ENCODE measurements at regions of chr3 and their contacts with region 1.

Region 1: GRCh38 chr3:98817547-98818041 is 54.5 kb downstream of the ST3GAL6 start:
- DNase-seq: no peak
- ATAC-seq: peak; percentile 65 to 93 (median 91)
- H3K4me3 ChIP-seq: no peak overlapping the region
- H3K27ac ChIP-seq: no peak overlapping the region
- H3K4me1 ChIP-seq: no peaks in the 10 kb centered on the region
- H3K27me3 ChIP-seq: no peaks in the 10 kb centered on the region
- CTCF ChIP-seq: peak; percentile 54 to 80 (median 72)

Region 2: GRCh38 chr3:98602078-98602678 is 215.4 kb before region 1 on chr3:
- intact Hi-C with region 1: loop called in 1 of 3 experiments (anchors 5 kb)
- DNase-seq: peak in 2 of 6 donors; percentile 13 to 49
- ATAC-seq: peak; percentile 60 to 95 (median 94)
- H3K4me3 ChIP-seq: no peak overlapping the region
- H3K27ac ChIP-seq: no peak overlapping the region
- H3K4me1 ChIP-seq: no peaks in the 10 kb centered on the region
- H3K27me3 ChIP-seq: no peaks in the 10 kb centered on the region
- CTCF ChIP-seq: peak in 3 of 4 donors; percentile 39 to 63 (median 56)

Region 3: DNA sequence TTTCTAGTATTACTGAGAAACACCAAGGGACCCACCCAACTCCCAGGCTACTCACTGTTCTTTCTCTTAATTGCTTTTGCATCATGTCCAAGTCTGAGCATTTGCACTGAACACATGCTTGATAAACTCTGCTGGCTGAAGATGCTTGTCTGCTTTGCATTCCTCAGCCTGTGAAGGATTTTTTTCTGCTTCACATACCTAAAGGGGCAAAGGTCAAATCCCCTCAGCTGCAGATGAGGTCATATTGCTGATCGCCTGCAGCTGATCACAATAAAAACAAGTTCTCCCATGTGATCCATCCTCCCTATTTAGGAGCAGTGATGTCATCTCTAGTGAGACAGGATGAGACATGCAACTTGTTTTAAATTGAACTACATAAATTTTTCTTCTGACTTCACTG is 168.5 kb after region 1 on chr3:
- intact Hi-C with region 1: loop called in 1 of 3 experiments (anchors 5 kb)
- DNase-seq: no peak
- ATAC-seq: no peak
- H3K4me3 ChIP-seq: no peak overlapping the region
- H3K27ac ChIP-seq: no peak overlapping the region
- H3K4me1 ChIP-seq: no peaks in the 10 kb centered on the region
- H3K27me3 ChIP-seq: no peaks in the 10 kb centered on the region
- CTCF ChIP-seq: no peak

Region 4: DNA sequence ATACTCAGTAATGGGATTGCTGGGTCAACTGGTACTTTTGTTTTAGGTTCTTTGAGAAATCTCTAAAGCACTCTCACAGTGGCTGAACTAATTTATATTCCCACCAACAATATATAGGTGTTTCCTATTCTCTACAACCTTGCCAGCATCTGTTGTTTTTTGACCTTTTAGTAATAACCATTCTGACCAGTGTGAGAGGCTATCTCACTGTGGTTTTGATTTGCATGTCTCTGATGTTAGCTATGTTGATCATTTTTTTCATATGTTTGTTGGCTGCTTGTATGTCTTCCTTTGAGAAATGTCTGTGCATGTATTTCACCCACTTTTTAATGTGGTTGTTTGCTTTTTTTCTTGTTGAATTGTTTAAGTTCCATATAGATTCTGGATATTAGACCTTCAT is 182.1 kb after region 1 on chr3:
- intact Hi-C with region 1: loop called in 1 of 3 experiments (anchors 5 kb)
- DNase-seq: no peak
- ATAC-seq: no peak
- H3K4me3 ChIP-seq: no peak overlapping the region
- H3K27ac ChIP-seq: no peak overlapping the region
- H3K4me1 ChIP-seq: no peaks in the 10 kb centered on the region
- H3K27me3 ChIP-seq: no peaks in the 10 kb centered on the region
- CTCF ChIP-seq: no peak

Region 5: DNA sequence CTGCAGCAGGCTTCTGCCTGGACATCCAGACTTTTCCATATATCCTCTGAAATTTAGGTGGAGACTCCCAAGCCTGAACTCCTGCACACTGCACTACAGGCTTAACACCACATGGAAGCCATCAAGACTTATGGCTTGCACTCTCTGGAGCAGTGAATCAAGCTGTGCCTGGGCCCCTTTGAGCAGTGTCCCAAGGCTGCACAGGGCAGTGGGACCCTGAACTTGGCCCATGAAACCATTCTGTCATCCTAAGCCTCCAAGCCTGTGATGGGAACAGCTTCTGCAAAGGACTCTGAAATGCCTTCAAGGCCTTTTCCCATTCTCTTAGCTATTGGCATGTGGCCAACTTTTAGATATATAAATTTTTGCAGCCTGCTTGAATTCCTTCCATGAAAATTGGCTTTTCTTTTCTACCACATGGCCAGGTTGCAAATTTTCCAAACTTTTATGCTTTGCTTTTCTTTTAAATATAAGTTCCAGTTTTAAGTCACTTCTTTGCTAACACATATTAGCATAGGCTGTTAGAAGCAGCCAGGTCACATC is 341.7 kb after region 1 on chr3:
- intact Hi-C with region 1: no loop called
- DNase-seq: peak in 1 of 6 donors; percentile 9
- ATAC-seq: no peak
- H3K4me3 ChIP-seq: no peak overlapping the region
- H3K27ac ChIP-seq: no peak overlapping the region
- H3K4me1 ChIP-seq: no peaks in the 10 kb centered on the region
- H3K27me3 ChIP-seq: no peaks in the 10 kb centered on the region
- CTCF ChIP-seq: no peak

Region 6: GRCh38 chr3:99172736-99173657 is 355.4 kb after region 1 on chr3:
- intact Hi-C with region 1: loop called in 1 of 3 experiments (anchors 10 kb)
- DNase-seq: peak; percentile 9 to 46 (median 33)
- ATAC-seq: peak in 3 of 4 donors; percentile 68 to 78 (median 73)
- H3K4me3 ChIP-seq: no peak overlapping the region
- H3K27ac ChIP-seq: no peak overlapping the region
- H3K4me1 ChIP-seq: no peaks in the 10 kb centered on the region
- H3K27me3 ChIP-seq: no peaks in the 10 kb centered on the region
- CTCF ChIP-seq: peak in 3 of 4 donors; percentile 45 to 50 (median 47)

Measured in pancreas (tissue), 10 donors.